Spleen (tissue), 13 donors: ENCODE measurements at regions of chr14 and their contacts with region 1.

Region 1: GRCh38 chr14:103910262-103910935 is 17.9 kb upstream of the TDRD9 start:
- DNase-seq: peak; percentile 89
- H3K4me3 ChIP-seq: peak overlapping the region in 5 of 8 donors; percentile 6 to 54 (median 17)
- H3K27ac ChIP-seq: peak overlapping the region in 6 of 8 donors; percentile 3 to 48 (median 30)
- H3K4me1 ChIP-seq: peaks cover 8 to 26% (median 13%) of the 10 kb centered on the region in 6 donors
- H3K27me3 ChIP-seq: no peaks in the 10 kb centered on the region
- CTCF ChIP-seq: peak; percentile 41 to 85 (median 76)
- POLR2A ChIP-seq: no peak

Region 2: DNA sequence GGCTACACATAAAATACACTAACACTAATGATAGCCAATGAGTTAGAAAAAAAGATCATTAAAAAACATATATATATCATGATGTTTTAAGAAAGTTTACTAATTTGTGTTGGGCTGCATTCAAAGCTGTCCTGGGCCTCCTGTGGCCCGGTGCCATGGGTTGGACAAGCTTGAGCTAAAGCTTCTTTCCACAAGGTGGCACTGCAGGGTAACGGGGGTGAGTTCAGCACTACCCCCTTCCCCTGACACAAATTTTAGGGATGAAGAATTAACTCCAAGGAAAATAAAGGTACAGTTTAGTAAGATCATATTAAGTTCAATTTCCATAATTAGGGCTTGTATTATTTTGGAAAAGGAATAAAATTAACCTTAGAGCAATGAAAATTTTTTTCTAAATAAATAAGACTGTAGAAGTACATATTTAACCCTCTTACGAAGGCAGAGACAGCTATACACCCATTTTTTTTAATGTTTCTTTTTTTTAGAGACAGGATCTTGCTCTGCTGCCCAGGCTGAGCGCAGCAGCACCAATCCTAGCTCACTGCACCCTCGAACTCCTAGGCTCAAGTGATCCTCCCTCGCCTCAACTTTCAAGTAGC is 101.9 kb before region 1 on chr14:
- intact Hi-C with region 1: loop called (anchors 5 kb)
- DNase-seq: peak; percentile 80
- H3K4me3 ChIP-seq: no peak overlapping the region
- H3K27ac ChIP-seq: no peak overlapping the region
- H3K4me1 ChIP-seq: peaks cover 0 to 43% (median 27%) of the 10 kb centered on the region in 6 donors
- H3K27me3 ChIP-seq: no peaks in the 10 kb centered on the region
- CTCF ChIP-seq: peak; percentile 56 to 88 (median 83)
- POLR2A ChIP-seq: no peak

Region 3: GRCh38 chr14:104037903-104038302 is 127.5 kb after region 1 on chr14:
- intact Hi-C with region 1: no loop called
- DNase-seq: no peak
- H3K4me3 ChIP-seq: no peak overlapping the region
- H3K27ac ChIP-seq: no peak overlapping the region
- H3K4me1 ChIP-seq: no peaks in the 10 kb centered on the region
- H3K27me3 ChIP-seq: peaks cover 0 to 45% (median 0%) of the 10 kb centered on the region in 7 donors
- CTCF ChIP-seq: no peak
- POLR2A ChIP-seq: no peak

Region 4: DNA sequence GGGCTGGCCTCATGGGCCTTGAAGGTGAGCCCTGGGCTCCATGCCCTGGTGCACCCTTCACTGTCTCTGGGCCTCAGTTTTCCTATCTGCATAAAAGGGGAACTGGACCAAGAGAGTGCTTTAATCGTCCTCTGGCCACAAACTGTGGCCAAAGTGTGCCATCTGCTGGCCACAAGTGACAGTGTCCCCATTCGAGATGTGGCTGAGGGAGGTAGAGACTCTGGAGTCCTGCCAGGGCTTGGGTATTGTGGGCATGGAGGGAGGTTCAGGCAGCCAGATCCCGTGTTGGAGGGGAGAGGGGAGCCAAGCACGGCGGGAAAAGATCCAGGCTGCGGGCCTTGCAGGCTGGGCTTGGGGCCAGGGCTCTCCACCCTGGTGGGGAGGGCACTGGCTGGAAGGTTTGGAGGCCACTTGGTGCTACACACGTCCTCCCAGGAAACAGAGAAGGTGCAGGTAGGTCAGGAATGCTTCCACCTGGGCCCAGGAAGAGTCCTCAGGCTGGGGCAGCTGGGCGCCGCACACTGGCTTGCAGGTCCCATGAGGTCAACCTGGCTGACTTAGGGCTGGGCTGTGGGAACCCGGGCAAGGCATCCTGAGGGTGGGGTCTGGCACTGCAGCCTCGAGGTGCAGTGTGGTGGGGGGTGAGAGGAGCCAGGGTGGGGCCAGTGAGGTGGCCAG is 220.7 kb after region 1 on chr14:
- intact Hi-C with region 1: no loop called
- DNase-seq: peak; percentile 58
- H3K4me3 ChIP-seq: no peak overlapping the region
- H3K27ac ChIP-seq: no peak overlapping the region
- H3K4me1 ChIP-seq: peaks cover 0 to 15% (median 11%) of the 10 kb centered on the region in 6 donors
- H3K27me3 ChIP-seq: peaks cover 0 to 75% (median 26%) of the 10 kb centered on the region in 7 donors
- CTCF ChIP-seq: peak in 10 of 11 experiments; percentile 26 to 73 (median 52)
- POLR2A ChIP-seq: no peak